Uterus (tissue), 4 donors: ENCODE measurements at regions of chr22 and their contacts with region 1.

Region 1: DNA sequence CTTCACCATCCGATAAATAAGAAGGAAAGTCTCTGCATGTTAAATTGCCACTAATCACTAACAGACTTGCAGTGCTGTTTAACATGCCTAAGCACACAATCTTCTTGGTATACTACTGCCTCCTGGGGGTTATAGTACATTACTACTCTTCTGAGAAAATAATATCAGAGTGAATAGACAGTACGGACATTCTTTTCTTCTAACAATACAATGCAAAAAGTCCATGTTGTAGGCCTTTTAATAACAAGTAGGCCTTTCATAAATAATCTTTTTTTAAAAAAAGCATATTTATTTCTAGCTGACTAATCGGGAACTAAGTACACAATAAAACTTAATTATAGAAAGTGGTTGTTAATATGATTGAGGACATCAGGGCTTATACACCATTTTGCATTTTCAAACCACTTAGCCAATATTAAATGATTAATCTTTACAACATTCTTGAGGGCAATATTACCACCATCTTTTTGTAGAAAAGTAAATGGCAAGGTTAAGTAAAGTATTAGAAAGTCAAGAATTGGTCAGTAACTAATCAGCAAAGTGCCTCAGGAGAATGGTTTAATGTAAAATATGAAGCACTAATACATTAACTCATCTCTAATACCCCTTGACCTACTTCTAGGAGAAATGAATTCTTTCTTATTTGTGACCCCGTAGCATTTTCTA is 84.7 kb downstream of the TTC28 start:
- DNase-seq: no peak
- H3K4me3 ChIP-seq: no peak overlapping the region
- H3K27ac ChIP-seq: no peak overlapping the region
- H3K4me1 ChIP-seq: no peaks in the 10 kb centered on the region
- H3K27me3 ChIP-seq: no peaks in the 10 kb centered on the region
- CTCF ChIP-seq: peak; percentile 73 to 91 (median 84)
- POLR2A ChIP-seq: no peak

Region 2: DNA sequence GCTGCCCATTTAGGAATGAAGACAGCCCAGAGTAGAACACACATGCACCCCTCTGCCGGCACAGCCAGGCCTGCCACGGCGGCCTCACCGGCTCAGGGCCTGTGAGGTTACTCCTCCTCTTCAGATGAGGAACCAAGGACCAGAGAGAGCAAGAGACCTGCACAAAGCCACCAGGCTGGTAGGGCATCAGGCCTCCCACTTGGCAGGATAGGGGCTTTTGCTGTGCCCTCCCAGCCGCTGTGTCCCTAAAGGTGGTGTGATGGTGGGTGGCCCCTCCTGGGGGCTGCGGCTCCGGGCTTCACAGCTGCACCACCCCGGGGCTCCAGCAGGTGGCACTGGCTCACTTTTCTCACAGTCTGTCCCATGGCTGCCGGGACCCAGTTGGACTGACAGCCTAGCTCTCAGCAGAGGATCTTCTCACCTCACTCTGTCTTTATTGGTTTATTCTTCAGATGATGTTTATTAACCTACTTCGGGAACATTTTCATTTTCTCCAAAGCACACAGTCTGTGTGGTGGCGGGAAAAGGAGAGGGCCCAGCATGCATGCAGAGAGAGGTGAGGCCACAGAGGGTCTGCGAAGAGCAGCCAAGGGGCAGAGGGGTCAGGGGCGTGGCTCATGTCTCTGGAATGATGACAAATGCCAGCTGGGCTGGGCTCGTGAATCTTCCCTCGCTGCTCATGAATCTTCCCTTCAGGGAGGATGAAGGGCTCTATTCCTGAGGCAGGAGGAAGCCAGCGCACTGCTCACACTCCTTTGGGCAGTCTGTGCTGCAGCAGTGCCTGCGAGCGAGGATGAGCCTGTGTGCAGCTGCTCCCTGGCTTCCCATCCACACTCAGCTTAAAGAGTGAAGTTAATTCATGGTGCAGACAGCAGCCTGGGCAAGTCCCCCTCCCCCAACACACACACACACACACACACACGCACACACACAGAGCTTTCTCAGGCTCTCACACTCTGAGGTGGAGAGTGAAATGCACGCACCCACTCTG is 574.8 kb before region 1 on chr22:
- intact Hi-C with region 1: loop called (anchors 10 kb)
- DNase-seq: peak; percentile 79 to 83
- H3K4me3 ChIP-seq: peak overlapping the region; percentile 12 to 24
- H3K27ac ChIP-seq: peak overlapping the region; percentile 66 to 74
- H3K4me1 ChIP-seq: peaks cover 8 to 9% of the 10 kb centered on the region in 2 donors
- H3K27me3 ChIP-seq: no peaks in the 10 kb centered on the region
- CTCF ChIP-seq: peak; percentile 93 to 95 (median 94)
- POLR2A ChIP-seq: no peak

Region 3: DNA sequence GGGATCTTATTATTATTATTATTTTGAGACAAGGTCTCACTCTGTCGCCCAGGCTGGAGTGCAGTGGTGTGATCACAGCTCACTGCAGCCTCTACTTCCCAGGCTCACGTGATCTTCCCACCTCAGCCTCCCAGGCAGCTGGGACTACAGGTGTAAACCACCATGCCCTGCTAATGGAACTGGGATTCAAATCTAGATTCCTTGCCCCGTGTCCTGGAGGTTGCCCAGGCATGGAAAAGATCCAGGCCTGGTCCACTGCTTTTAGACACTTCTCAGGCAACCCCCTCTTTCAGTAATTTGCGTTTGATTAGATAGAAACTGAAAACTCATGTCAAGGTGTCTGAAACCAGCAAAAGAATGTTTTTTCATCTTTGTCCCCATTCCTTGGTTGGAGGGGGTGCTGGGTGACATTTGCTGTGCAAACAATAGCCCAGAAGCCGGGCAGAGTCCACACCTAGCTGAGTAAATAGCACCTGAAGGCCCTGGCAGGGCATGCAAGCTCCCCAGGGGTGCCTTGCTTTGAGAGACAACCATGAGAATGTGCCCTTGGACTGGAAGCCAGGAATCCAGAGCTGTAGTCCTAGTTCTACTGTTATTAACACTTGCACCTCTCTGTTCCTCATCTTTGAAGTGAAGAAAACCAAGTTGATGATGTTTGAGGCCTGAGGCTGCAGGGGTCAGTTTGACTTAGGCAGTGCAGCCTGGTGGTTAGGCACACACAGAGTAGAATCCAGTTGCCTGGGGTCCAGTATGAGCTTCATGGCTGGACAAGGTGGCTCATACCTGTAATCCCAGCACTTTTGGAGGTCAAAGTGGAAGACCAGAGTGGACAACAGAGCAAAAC is 224.5 kb after region 1 on chr22:
- intact Hi-C with region 1: no loop called
- DNase-seq: no peak
- H3K4me3 ChIP-seq: no peak overlapping the region
- H3K27ac ChIP-seq: peak overlapping the region; percentile 55 to 59
- H3K4me1 ChIP-seq: no peaks in the 10 kb centered on the region
- H3K27me3 ChIP-seq: no peaks in the 10 kb centered on the region
- CTCF ChIP-seq: no peak
- POLR2A ChIP-seq: no peak